BJ (cell line): ENCODE measurements at regions of chr22 and their contacts with region 1.

Region 1: DNA sequence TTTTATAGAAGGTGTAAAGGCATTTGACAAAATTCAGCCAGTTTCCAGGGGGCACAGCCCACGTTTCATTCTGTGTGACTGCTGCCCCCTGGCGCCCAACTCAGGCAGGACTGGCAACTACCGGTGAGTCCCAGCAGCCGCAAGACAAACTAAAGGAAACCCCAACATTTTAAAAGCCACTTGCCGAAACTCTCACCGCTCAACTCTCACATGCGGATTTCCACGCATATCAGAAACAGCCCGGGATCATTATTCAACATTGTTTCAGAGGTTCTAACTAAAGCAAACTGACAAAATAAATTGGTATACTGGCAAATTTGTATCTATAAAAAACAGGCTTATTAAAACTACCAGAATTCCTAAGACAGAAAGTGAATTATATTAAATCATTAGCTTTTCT is 48.2 kb downstream of the MORC2 start:
- DNase-seq: no peak
- H3K4me3 ChIP-seq: no peak overlapping the region
- H3K27me3 ChIP-seq: no peaks in the 10 kb centered on the region
- CTCF ChIP-seq: peak; percentile 91

Region 2: GRCh38 chr22:30763815-30764686 is 156.4 kb before region 1 on chr22:
- CTCF ChIA-PET with region 1: interaction called, 98 read pairs
- POLR2A ChIA-PET with region 1: no interaction called
- DNase-seq: peak; percentile 18
- H3K4me3 ChIP-seq: no peak overlapping the region
- H3K27me3 ChIP-seq: no peaks in the 10 kb centered on the region
- CTCF ChIP-seq: peak; percentile 70

Region 3: DNA sequence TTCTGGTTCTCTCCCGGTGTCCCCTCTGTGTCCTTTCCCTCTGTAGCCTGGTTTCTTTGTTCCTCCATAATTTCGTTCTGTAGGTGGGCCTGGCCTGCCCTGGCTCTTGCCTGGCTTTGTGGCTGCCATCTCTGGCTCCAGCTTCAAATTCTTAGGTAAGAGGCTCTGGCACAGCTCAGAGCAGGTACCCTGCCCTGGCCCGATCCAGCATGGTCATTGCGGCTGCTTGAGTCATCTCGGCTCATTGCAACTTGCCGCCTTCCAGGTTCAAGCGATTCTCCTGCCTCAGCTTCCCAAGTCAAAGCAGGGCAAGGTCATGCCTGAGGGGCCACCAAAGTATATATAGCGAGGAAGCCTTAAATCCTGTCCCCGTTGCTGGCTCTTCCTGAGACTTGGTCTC is 149.7 kb before region 1 on chr22:
- CTCF ChIA-PET with region 1: interaction called, 98 read pairs
- POLR2A ChIA-PET with region 1: no interaction called
- DNase-seq: no peak
- H3K4me3 ChIP-seq: no peak overlapping the region
- H3K27me3 ChIP-seq: no peaks in the 10 kb centered on the region
- CTCF ChIP-seq: no peak

Region 4: DNA sequence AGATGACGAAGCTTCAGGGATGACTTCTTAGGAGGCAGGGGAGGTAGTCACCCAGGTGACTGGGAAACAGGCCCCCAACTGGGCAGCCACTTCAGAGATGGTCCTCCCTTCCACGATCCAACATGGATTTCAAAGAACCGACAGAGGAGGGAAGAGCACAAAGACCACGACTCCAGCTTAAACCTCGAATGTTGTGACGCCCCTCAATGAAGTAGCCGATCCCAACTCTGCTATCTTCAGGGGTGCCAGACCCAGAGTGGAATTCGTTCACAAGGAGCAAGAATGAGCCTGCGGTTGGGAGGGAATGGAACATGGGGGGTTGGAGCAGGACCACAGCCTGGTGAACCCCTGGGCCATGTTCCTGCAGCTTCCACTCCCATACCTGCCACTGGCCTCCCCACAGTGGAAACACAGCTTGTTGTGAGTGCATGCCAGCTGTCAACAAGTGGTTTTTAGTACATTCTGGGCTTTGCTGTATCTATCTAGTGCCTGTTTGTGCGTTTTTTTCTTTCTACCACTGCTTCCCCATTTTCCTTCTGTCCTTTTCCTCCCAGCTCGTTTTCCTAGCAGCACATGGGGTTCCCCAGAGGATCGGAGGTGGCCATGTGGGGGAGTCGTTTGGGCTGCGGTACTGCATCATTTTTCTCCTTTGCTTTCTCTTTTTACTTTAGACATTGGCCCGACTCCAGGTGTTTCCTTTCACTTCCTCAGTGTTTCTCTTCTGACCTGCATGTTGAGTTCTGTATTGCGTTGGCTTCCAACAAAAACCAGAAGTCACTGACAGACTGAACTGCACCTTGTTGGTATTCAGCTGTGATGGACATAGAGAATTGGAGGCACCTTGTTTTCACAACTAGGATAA is 17.7 kb before region 1 on chr22:
- CTCF ChIA-PET with region 1: interaction called, 21 read pairs
- POLR2A ChIA-PET with region 1: no interaction called
- DNase-seq: no peak
- H3K4me3 ChIP-seq: no peak overlapping the region
- H3K27me3 ChIP-seq: no peaks in the 10 kb centered on the region
- CTCF ChIP-seq: no peak

Region 5: DNA sequence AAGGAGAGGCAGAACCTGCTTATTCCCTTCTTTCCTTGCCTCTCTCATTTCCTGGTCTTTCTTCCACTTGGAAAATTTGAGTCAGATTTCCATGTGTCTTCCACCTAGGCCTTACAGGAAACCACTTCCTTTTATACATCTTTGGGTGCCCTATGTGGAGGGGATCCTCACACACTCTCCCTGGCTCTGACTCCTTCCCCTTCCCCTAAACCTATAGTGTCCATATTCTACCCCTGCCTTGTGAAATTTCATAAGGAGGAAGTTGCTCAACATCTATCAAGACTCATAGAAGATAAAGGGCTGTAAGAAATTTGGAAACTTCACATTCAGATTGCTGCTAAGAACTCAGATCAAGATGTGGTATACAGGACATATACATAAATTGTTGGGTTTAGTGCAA is 69.1 kb after region 1 on chr22:
- CTCF ChIA-PET with region 1: no interaction called
- POLR2A ChIA-PET with region 1: no interaction called
- DNase-seq: no peak
- H3K4me3 ChIP-seq: no peak overlapping the region
- H3K27me3 ChIP-seq: no peaks in the 10 kb centered on the region
- CTCF ChIP-seq: no peak